A673 (cell line): ENCODE measurements at regions of chr9 and their contacts with region 1.

Region 1: GRCh38 chr9:85425153-85425611 is 316.6 kb downstream of the AGTPBP1 start:
- DNase-seq: peak; percentile 79
- H3K4me3 ChIP-seq: no peak overlapping the region
- H3K27ac ChIP-seq: no peak overlapping the region
- H3K4me1 ChIP-seq: no peaks in the 10 kb centered on the region
- H3K27me3 ChIP-seq: peaks cover 34% of the 10 kb centered on the region
- CTCF ChIP-seq: peak; percentile 92

Region 2: GRCh38 chr9:84404095-84404686 is 1021.0 kb before region 1 on chr9:
- CTCF ChIA-PET with region 1: no interaction called
- POLR2A ChIA-PET with region 1: no interaction called
- intact Hi-C with region 1: loop called (anchors 5 kb)
- DNase-seq: peak; percentile 15
- H3K4me3 ChIP-seq: no peak overlapping the region
- H3K27ac ChIP-seq: no peak overlapping the region
- H3K4me1 ChIP-seq: no peaks in the 10 kb centered on the region
- H3K27me3 ChIP-seq: no peaks in the 10 kb centered on the region
- CTCF ChIP-seq: peak; percentile 90

Region 3: GRCh38 chr9:85038824-85039608 is 386.2 kb before region 1 on chr9:
- CTCF ChIA-PET with region 1: no interaction called
- POLR2A ChIA-PET with region 1: no interaction called
- intact Hi-C with region 1: no loop called
- DNase-seq: no peak
- H3K4me3 ChIP-seq: no peak overlapping the region
- H3K27ac ChIP-seq: no peak overlapping the region
- H3K4me1 ChIP-seq: no peaks in the 10 kb centered on the region
- H3K27me3 ChIP-seq: peaks cover 2% of the 10 kb centered on the region
- CTCF ChIP-seq: no peak

Region 4: GRCh38 chr9:85577353-85577952 is 152.3 kb after region 1 on chr9:
- CTCF ChIA-PET with region 1: no interaction called
- POLR2A ChIA-PET with region 1: no interaction called
- intact Hi-C with region 1: no loop called
- DNase-seq: no peak
- H3K4me3 ChIP-seq: no peak overlapping the region
- H3K27ac ChIP-seq: no peak overlapping the region
- H3K4me1 ChIP-seq: no peaks in the 10 kb centered on the region
- H3K27me3 ChIP-seq: no peaks in the 10 kb centered on the region
- CTCF ChIP-seq: no peak